ENCODE measurements at regions of chr3 and their contacts with region 1.

Region 1: GRCh38 chr3:149080701-149081093 is 5.6 kb downstream of the HLTF start:
- DNase-seq: peak; percentile 40
- ATAC-seq: no peak
- H3K4me3 ChIP-seq: no peak overlapping the region
- H3K27ac ChIP-seq: no peak overlapping the region
- H3K4me1 ChIP-seq: peaks cover 13% of the 10 kb centered on the region
- H3K27me3 ChIP-seq: no peaks in the 10 kb centered on the region
- CTCF ChIP-seq: no peak

Region 2: GRCh38 chr3:148991194-148992026 is 89.3 kb before region 1 on chr3 and contains the start of gene GYG1:
- CTCF ChIA-PET with region 1: no interaction called
- POLR2A ChIA-PET with region 1: no interaction called
- intact Hi-C with region 1: loop called (anchors 5 kb)
- DNase-seq: peak; percentile 82
- ATAC-seq: peak; percentile 87
- H3K4me3 ChIP-seq: peak within 1 kb of the TSS; percentile 92
- H3K27ac ChIP-seq: peak within 1 kb of the TSS; percentile 31; the same call in 1 of the 2 replicates
- H3K4me1 ChIP-seq: peaks cover 14% of the 10 kb centered on the region
- H3K27me3 ChIP-seq: no peaks in the 10 kb centered on the region
- CTCF ChIP-seq: peak; percentile 60
- total RNA-seq, gene GYG1: 9.9 and 12.0 TPM in 2 replicates

Region 3: DNA sequence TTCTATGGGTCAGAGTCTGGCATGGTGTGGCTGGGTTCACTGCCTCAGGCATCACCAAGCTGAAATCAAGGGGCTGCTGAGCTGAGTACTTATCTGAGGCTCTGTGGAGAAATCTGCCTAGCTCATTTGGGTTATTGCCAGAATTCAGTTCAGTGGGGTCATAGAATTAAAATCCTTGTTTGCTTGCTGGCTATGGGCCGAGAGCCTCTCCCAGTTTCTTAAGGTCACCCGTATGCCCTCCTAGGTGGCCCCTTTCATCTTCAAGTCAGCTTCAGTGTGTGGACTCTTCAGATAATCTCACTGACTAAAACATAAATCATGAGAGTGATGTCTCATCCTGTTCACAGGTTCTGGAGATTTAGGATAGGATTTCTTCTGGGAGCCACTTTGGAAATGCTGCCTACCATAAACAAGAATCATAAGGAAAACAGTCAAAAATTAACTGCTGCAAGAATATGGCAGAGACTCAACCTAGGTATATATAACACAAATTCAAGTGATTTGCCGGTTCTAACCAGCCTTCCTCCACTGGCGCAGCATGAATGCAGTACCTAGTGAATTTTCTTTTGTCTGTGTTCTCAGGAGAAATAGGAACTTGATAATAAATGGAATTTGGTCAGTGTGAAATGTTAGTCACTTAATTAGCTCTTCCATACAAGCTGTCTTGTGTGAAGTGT is 135.6 kb after region 1 on chr3:
- CTCF ChIA-PET with region 1: no interaction called
- POLR2A ChIA-PET with region 1: interaction called, 12 read pairs
- intact Hi-C with region 1: no loop called
- DNase-seq: no peak
- ATAC-seq: no peak
- H3K4me3 ChIP-seq: no peak overlapping the region
- H3K27ac ChIP-seq: no peak overlapping the region
- H3K4me1 ChIP-seq: no peaks in the 10 kb centered on the region
- H3K27me3 ChIP-seq: no peaks in the 10 kb centered on the region
- CTCF ChIP-seq: no peak